Activated naive CD4-positive, alpha-beta T cell treated with anti-CD3 and anti-CD28 coated beads for 36 hours (primary cell): ENCODE measurements at regions of chr6 and their contacts with region 1.

Region 1: GRCh38 chr6:32177788-32178546 is at the start of gene RNF5:
- DNase-seq: peak; percentile 97
- H3K4me3 Mint-ChIP-seq: peak within 1 kb of the TSS; percentile 91
- H3K27ac Mint-ChIP-seq: peak within 1 kb of the TSS; percentile 96
- H3K4me1 Mint-ChIP-seq: peaks cover 61% of the 10 kb centered on the region
- H3K27me3 Mint-ChIP-seq: no peaks in the 10 kb centered on the region
- total RNA-seq, gene RNF5: 39.5 to 39.9 TPM

Region 2: DNA sequence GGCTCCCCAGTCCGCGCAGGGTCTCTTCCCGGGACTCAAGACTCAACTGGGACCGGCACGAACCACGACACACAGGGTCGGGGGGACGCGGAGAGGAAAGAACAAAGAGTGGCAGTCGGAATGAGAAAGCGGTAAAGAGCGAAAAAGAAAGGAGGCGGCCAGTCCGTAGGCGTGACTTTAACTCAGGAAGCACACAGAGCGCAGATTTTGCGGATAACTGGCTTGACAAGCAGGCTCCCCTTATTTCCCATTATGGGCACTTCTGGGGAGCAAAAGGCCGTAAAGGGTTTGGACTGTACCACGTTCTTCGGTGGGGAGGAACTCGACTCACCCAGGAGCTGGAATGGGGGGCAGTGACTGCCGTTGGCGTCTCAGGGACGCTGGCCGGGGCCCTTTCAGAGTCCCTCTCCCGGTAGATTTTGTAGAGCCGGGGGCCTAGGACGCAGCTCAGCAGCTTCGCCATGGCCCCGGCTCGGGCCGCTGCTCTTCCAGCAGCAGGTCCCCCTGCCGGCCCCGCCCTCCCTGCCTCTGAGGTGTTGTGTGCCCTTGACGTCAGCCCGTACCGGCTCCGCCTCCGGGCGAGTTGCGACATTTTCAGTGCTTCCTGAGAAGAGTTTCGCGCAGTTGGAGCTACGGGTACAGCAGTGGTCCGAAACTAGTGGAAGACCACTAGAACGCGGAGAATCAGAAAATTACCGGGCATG is 475.0 kb before region 1 on chr6 and contains the start of gene ABHD16A:
- CTCF ChIA-PET with region 1: no interaction called
- intact Hi-C with region 1: loop called (anchors 1 kb)
- DNase-seq: peak; percentile 99
- H3K4me3 Mint-ChIP-seq: peak within 1 kb of the TSS; percentile 99
- H3K27ac Mint-ChIP-seq: peak within 1 kb of the TSS; percentile 97
- H3K4me1 Mint-ChIP-seq: peaks cover 22% of the 10 kb centered on the region
- H3K27me3 Mint-ChIP-seq: no peaks in the 10 kb centered on the region
- total RNA-seq, gene ABHD16A: 19.9 to 22.5 TPM

Region 3: DNA sequence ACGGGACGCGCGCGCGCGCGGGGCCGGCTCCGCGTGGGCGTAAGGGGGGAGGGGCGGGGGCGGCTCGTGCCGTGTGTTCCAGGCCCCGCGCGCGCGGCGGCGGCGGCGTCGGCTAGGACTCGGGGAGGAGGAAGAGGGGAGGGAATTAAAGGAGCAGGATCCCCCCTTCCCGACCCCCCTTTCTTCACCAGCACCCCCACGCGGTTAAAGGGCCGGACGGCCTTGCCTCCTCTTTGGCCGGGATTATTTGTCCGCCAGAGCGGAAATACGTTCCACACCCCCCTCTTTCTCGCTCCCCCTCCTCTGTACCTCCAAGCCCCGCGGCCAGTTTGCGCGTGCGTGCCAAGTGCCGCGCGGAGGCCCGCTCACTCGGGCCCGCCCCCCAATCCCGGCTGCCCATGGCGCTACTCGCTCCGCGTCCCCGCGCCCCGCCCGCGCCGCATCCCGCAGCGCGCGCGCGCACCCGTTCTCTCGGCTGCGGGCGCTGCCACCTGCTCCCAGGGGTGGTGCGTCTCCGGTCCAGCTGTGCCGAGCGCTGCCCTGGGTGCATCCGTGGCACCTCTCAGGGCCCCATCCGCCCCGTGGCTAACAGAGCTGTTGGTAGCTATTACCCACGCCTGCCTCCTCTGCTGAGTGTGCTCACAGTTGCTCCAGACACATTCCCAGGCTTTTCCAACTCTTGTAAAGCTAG is 275.9 kb before region 1 on chr6 and contains the start of gene ZBTB12:
- CTCF ChIA-PET with region 1: no interaction called
- intact Hi-C with region 1: loop called (anchors 1 kb)
- DNase-seq: peak; percentile 87
- H3K4me3 Mint-ChIP-seq: peak within 1 kb of the TSS; percentile 82
- H3K27ac Mint-ChIP-seq: peak within 1 kb of the TSS; percentile 81
- H3K4me1 Mint-ChIP-seq: peaks cover 29% of the 10 kb centered on the region
- H3K27me3 Mint-ChIP-seq: no peaks in the 10 kb centered on the region
- total RNA-seq, gene ZBTB12: 0.57 to 0.69 TPM

Region 4: GRCh38 chr6:32087574-32088486 is 90.1 kb before region 1 on chr6:
- CTCF ChIA-PET with region 1: no interaction called
- intact Hi-C with region 1: no loop called
- DNase-seq: peak; percentile 89
- H3K4me3 Mint-ChIP-seq: no peak overlapping the region
- H3K27ac Mint-ChIP-seq: no peak overlapping the region
- H3K4me1 Mint-ChIP-seq: peaks cover 8% of the 10 kb centered on the region
- H3K27me3 Mint-ChIP-seq: peaks cover 17% of the 10 kb centered on the region

Region 5: GRCh38 chr6:32153564-32154513 is 24.1 kb before region 1 on chr6 and contains the start of gene PPT2:
- CTCF ChIA-PET with region 1: no interaction called
- intact Hi-C with region 1: loop called (anchors 1 kb)
- DNase-seq: peak; percentile 90
- H3K4me3 Mint-ChIP-seq: peak within 1 kb of the TSS; percentile 99
- H3K27ac Mint-ChIP-seq: peak within 1 kb of the TSS; percentile 88
- H3K4me1 Mint-ChIP-seq: peaks cover 46% of the 10 kb centered on the region
- H3K27me3 Mint-ChIP-seq: peaks cover 7% of the 10 kb centered on the region
- total RNA-seq, gene PPT2: 13.2 to 14.8 TPM

Region 6: DNA sequence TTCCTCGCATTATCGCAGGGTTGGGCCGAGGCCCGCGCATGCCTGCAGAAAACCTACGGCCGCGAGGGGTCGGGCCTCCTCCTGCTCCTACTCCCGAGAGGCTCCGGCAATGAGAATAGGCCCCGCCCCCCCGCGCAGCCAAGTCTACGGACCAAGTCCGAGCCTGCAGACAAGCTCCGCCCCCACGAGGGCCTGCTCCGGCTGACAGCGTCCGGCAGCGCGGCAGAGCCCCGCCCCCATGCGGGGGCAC is 17.6 kb after region 1 on chr6:
- CTCF ChIA-PET with region 1: interaction called, 11 read pairs
- intact Hi-C with region 1: loop called (anchors 1 kb)
- DNase-seq: peak; percentile 100
- H3K4me3 Mint-ChIP-seq: peak overlapping the region; percentile 97
- H3K27ac Mint-ChIP-seq: peak overlapping the region; percentile 95
- H3K4me1 Mint-ChIP-seq: peaks cover 36% of the 10 kb centered on the region
- H3K27me3 Mint-ChIP-seq: no peaks in the 10 kb centered on the region